Right cardiac atrium (tissue), 5 donors: ENCODE measurements at regions of chr9 and their contacts with region 1.

Region 1: GRCh38 chr9:68595868-68596267 is 55.2 kb upstream of the TMEM252 start:
- DNase-seq: no peak
- ATAC-seq: peak in 1 of 2 donors; percentile 16
- H3K4me3 ChIP-seq: no peak overlapping the region
- H3K27ac ChIP-seq: no peak overlapping the region
- H3K4me1 ChIP-seq: no peaks in the 10 kb centered on the region
- H3K27me3 ChIP-seq: no peaks in the 10 kb centered on the region

Region 2: DNA sequence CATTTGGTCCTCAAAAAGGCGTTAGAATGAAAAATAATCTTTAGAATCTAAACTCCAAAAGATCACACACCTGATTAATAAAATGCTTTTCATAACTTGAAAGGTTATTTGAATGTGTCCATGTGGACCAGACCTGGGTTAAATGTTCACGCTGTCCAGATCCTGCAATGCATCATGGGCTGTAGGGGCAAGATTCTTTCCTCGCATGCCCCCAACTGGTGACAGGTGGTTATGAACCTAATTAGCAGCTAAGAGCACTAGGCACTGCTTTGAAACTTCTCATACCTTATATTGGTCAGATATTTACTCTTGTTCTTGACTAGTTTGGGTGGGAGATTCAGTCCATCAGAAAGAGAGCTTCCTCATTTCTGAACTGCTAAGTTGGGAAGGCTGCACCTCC is 89.9 kb after region 1 on chr9:
- intact Hi-C with region 1: loop called in 1 of 4 experiments (anchors 10 kb)
- DNase-seq: no peak
- ATAC-seq: peak in 1 of 2 donors; percentile 43
- H3K4me3 ChIP-seq: no peak overlapping the region
- H3K27ac ChIP-seq: no peak overlapping the region
- H3K4me1 ChIP-seq: no peaks in the 10 kb centered on the region
- H3K27me3 ChIP-seq: no peaks in the 10 kb centered on the region

Region 3: GRCh38 chr9:68697851-68698250 is 102.0 kb after region 1 on chr9:
- intact Hi-C with region 1: loop called in 1 of 4 experiments (anchors 5 kb)
- DNase-seq: no peak
- ATAC-seq: no peak
- H3K4me3 ChIP-seq: no peak overlapping the region
- H3K27ac ChIP-seq: no peak overlapping the region
- H3K4me1 ChIP-seq: no peaks in the 10 kb centered on the region
- H3K27me3 ChIP-seq: no peaks in the 10 kb centered on the region

Region 4: DNA sequence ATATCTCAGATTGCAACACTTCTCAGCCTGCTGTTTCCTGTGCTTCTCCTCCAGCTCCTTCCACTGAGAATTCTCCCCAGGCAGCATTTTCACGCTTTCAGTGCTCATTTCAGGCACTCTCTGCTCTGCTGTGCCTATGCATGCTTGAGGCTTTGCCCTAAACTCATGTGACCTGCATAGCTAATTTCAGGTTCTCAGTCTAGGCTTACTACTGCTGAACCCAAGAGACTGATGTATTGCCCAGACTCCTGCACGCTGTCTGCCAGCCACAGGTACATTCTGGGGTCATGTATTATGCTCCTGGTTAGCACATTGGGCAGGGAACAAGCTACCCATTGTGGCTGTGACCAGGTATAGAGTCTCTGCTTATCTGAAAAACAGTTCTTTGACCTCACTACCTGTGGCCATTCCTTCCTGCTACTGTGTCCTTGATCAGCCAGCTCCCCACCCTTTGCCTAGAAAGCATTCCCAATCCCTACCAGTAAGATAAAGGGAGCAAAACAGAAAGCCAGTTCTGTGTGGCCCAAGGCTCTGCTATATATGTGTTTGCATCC is 143.8 kb after region 1 on chr9:
- intact Hi-C with region 1: no loop called
- DNase-seq: no peak
- ATAC-seq: peak; percentile 46 to 70
- H3K4me3 ChIP-seq: no peak overlapping the region
- H3K27ac ChIP-seq: peak overlapping the region; percentile 70
- H3K4me1 ChIP-seq: peaks cover 13% of the 10 kb centered on the region
- H3K27me3 ChIP-seq: no peaks in the 10 kb centered on the region

Region 5: GRCh38 chr9:68779558-68780384 is 183.9 kb after region 1 on chr9:
- intact Hi-C with region 1: loop called in 1 of 4 experiments (anchors 10 kb)
- DNase-seq: peak; percentile 96 to 98 (median 98)
- ATAC-seq: peak; percentile 97
- H3K4me3 ChIP-seq: peak overlapping the region; percentile 74
- H3K27ac ChIP-seq: peak overlapping the region; percentile 93
- H3K4me1 ChIP-seq: peaks cover 3% of the 10 kb centered on the region
- H3K27me3 ChIP-seq: no peaks in the 10 kb centered on the region

Region 6: GRCh38 chr9:69019808-69020207 is 423.9 kb after region 1 on chr9:
- intact Hi-C with region 1: loop called in 1 of 4 experiments (anchors 10 kb)
- DNase-seq: no peak
- ATAC-seq: no peak
- H3K4me3 ChIP-seq: no peak overlapping the region
- H3K27ac ChIP-seq: no peak overlapping the region
- H3K4me1 ChIP-seq: no peaks in the 10 kb centered on the region
- H3K27me3 ChIP-seq: no peaks in the 10 kb centered on the region